Posterior vena cava (tissue), 2 donors: ENCODE measurements at regions of chr11 and their contacts with region 1.

Region 1: GRCh38 chr11:66810576-66811185 is 32.6 kb upstream of the RCE1 start:
- DNase-seq: no peak

Region 2: GRCh38 chr11:66856496-66857233 is 46.0 kb after region 1 on chr11 and contains the start of gene LRFN4:
- intact Hi-C with region 1: loop called in 1 of 2 experiments (anchors 1 kb)
- DNase-seq: no peak
- total RNA-seq, gene LRFN4: 15.0 to 16.9 TPM

Region 3: GRCh38 chr11:66976048-66976467 is 165.4 kb after region 1 on chr11:
- intact Hi-C with region 1: no loop called
- DNase-seq: no peak